ENCODE measurements at regions of chrX and their contacts with region 1.

Region 1: DNA sequence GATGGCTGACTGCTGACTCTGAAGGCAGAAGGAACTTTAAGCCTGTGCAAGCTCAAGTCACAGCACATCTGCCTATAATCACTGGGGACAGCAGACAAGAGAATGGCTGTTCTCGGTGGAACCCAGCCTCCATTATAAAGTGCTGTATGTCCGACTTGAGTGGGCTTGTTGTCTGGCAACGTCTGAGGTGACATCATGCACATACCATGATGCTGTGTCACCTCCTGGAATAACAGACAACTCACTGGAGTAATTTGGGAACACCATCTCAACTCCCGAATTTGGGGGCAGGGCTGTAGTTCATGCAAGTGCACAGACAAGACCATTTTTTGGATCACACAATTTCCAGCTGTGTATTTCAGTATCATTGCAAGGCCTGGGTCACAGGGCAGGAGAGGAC is 59.8 kb upstream of the GPM6B start:
- DNase-seq: no peak
- H3K4me3 ChIP-seq: no peak overlapping the region
- H3K27ac ChIP-seq: peak overlapping the region in 1 of 2 donors; percentile 38
- H3K4me1 ChIP-seq: no peaks in the 10 kb centered on the region
- H3K27me3 ChIP-seq: peaks cover 0 to 55% of the 10 kb centered on the region in 2 donors
- CTCF ChIP-seq: no peak
- POLR2A ChIP-seq: no peak

Region 2: GRCh38 chrX:15500497-15500966 is 1623.9 kb after region 1 on chrX and contains the start of gene BMX:
- intact Hi-C with region 1: loop called (anchors 5 kb)
- DNase-seq: no peak
- H3K4me3 ChIP-seq: peak within 1 kb of the TSS in 2 of 3 donors; percentile 7 to 15
- H3K27ac ChIP-seq: no peak within 1 kb of the TSS
- H3K4me1 ChIP-seq: no peaks in the 10 kb centered on the region
- H3K27me3 ChIP-seq: peaks cover 0 to 42% of the 10 kb centered on the region in 2 donors
- CTCF ChIP-seq: no peak
- POLR2A ChIP-seq: no peak
- total RNA-seq, gene BMX: 2.3 to 4.2 (median 3.9) TPM

Measured in breast epithelium (tissue), 4 donors.